B cell (primary cell): ENCODE measurements at regions of chr3 and their contacts with region 1.

Region 1: DNA sequence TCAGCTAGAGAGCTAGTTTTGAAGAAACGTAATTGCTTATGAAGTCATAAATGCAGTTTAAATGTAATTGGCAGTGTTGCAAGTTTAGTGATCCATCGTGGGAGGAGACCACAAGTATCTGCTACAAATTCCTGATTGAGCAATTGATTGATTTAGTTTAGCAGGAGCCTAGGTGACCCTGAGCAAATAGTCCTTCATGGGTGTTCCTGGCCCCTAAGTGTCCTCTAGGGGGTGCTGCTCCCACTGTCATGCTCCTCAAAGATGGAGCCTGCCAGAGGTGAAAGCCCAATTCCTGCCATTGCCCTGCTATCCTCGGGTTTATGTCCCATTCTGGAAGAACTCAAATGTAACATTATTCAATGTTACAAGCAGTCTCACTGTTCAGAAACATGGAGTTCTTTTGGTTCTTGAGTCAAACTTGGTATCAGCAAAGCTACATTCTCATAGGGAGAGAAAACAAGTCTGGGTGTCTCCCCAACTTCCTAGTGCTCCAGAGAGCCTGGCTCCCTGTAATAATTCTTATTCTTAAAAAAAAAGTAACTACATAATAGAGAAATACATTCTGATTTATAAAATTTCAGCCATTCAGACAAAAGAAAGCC is 29.8 kb upstream of the SENP5 start:
- DNase-seq: peak; percentile 81
- ATAC-seq: peak; percentile 90
- H3K4me3 ChIP-seq: no peak overlapping the region
- H3K4me3 Mint-ChIP-seq: no peak overlapping the region
- H3K27ac ChIP-seq: no peak overlapping the region
- H3K27ac Mint-ChIP-seq: no peak overlapping the region
- H3K4me1 ChIP-seq: peaks cover 0 to 2% of the 10 kb centered on the region in 2 donors
- H3K4me1 Mint-ChIP-seq: no peaks in the 10 kb centered on the region
- H3K27me3 ChIP-seq: no peaks in the 10 kb centered on the region
- H3K27me3 Mint-ChIP-seq: no peaks in the 10 kb centered on the region
- CTCF ChIP-seq: peak; percentile 93

Region 2: GRCh38 chr3:196639483-196640296 is 198.2 kb before region 1 on chr3 and contains the start of gene NRROS:
- CTCF ChIA-PET with region 1: no interaction called
- POLR2A ChIA-PET with region 1: no interaction called
- intact Hi-C with region 1: no loop called
- DNase-seq: peak; percentile 91
- ATAC-seq: peak; percentile 48
- H3K4me3 ChIP-seq: peak within 1 kb of the TSS; percentile 80 to 88 (median 83)
- H3K4me3 Mint-ChIP-seq: peak within 1 kb of the TSS; percentile 89
- H3K27ac ChIP-seq: peak within 1 kb of the TSS; percentile 85 to 93
- H3K27ac Mint-ChIP-seq: peak within 1 kb of the TSS; percentile 99
- H3K4me1 ChIP-seq: peaks cover 58 to 71% of the 10 kb centered on the region in 2 donors
- H3K4me1 Mint-ChIP-seq: peaks cover 73% of the 10 kb centered on the region
- H3K27me3 ChIP-seq: no peaks in the 10 kb centered on the region
- H3K27me3 Mint-ChIP-seq: no peaks in the 10 kb centered on the region
- CTCF ChIP-seq: no peak
- total RNA-seq, gene NRROS: 85.9 and 87.9 TPM in 2 replicates

Region 3: GRCh38 chr3:196867507-196868296 is 29.8 kb after region 1 on chr3 and contains the start of gene SENP5:
- CTCF ChIA-PET with region 1: interaction called, 4 read pairs
- POLR2A ChIA-PET with region 1: no interaction called
- intact Hi-C with region 1: loop called (anchors 1 kb)
- DNase-seq: peak; percentile 93
- ATAC-seq: peak; percentile 97
- H3K4me3 ChIP-seq: peak within 1 kb of the TSS; percentile 63 to 89 (median 77)
- H3K4me3 Mint-ChIP-seq: peak within 1 kb of the TSS; percentile 96
- H3K27ac ChIP-seq: peak within 1 kb of the TSS; percentile 77 to 95
- H3K27ac Mint-ChIP-seq: peak within 1 kb of the TSS; percentile 95
- H3K4me1 ChIP-seq: peaks cover 14 to 19% of the 10 kb centered on the region in 2 donors
- H3K4me1 Mint-ChIP-seq: peaks cover 29% of the 10 kb centered on the region
- H3K27me3 ChIP-seq: no peaks in the 10 kb centered on the region
- H3K27me3 Mint-ChIP-seq: no peaks in the 10 kb centered on the region
- CTCF ChIP-seq: no peak
- total RNA-seq, gene SENP5: 51.5 and 58.4 TPM in 2 replicates

Region 4: DNA sequence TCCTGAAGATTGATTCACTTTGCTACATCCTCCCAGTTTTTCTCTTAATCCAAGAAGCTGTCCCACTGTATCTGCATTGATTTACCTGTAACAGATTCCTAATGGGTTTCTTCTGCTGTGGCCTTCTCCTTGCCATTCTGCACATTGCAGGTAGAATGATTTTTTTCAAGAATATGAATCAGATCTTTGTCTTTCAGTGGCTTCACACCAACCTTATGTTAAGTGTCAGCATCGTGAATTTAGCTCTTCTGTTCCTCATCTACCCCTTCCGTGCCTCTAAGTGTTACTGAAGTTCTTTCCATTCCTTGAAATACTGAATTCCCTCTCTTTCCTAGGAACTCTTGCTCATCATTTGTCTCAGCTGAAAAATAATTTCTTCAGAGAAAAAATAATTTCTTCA is 37.3 kb after region 1 on chr3:
- CTCF ChIA-PET with region 1: no interaction called
- POLR2A ChIA-PET with region 1: interaction called, 11 read pairs
- intact Hi-C with region 1: no loop called
- DNase-seq: no peak
- ATAC-seq: no peak
- H3K4me3 ChIP-seq: no peak overlapping the region
- H3K4me3 Mint-ChIP-seq: no peak overlapping the region
- H3K27ac ChIP-seq: no peak overlapping the region
- H3K27ac Mint-ChIP-seq: no peak overlapping the region
- H3K4me1 ChIP-seq: peaks cover 3% of the 10 kb centered on the region in 2 donors
- H3K4me1 Mint-ChIP-seq: peaks cover 36% of the 10 kb centered on the region
- H3K27me3 ChIP-seq: no peaks in the 10 kb centered on the region
- H3K27me3 Mint-ChIP-seq: no peaks in the 10 kb centered on the region
- CTCF ChIP-seq: no peak

Region 5: DNA sequence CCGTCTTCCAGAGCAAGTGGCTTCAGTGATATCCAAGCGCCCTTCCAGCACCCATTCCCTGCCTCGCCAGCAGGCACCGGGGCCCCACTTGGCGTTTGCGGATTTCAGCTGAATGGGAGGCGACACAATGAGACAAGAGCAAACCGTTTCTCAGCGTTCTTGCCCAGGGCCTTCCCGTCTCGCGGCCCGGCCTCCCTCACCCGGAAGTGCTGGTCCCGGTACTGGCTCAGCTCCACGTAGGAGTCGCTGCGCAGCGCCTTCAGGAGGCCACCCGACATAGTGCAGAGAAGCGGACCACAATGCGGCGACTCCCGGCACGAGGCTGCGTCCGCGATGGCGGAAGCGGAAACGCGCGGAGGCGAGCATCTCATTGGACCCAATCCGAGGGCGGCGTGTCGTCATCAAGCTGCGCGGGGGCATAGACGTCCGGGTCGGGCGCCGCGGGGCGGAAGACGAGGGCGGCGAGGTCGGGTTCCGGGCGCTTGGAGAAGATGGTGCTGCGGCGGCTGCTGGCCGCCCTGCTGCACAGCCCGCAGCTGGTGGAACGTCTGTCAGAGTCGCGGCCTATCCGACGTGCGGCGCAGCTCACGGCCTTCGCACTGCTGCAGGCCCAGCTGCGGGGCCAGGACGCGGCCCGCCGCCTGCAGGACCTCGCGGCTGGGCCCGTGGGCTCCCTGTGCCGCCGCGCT is 104.5 kb after region 1 on chr3 and contains the start of gene NCBP2:
- CTCF ChIA-PET with region 1: interaction called, 19 read pairs
- POLR2A ChIA-PET with region 1: interaction called, 7 read pairs
- intact Hi-C with region 1: no loop called
- DNase-seq: peak; percentile 99
- ATAC-seq: peak; percentile 91
- H3K4me3 ChIP-seq: peak within 1 kb of the TSS; percentile 83 to 99 (median 92)
- H3K4me3 Mint-ChIP-seq: peak within 1 kb of the TSS; percentile 98
- H3K27ac ChIP-seq: peak within 1 kb of the TSS; percentile 92 to 97
- H3K27ac Mint-ChIP-seq: peak within 1 kb of the TSS; percentile 99
- H3K4me1 ChIP-seq: peaks cover 29 to 35% of the 10 kb centered on the region in 2 donors
- H3K4me1 Mint-ChIP-seq: peaks cover 50% of the 10 kb centered on the region
- H3K27me3 ChIP-seq: no peaks in the 10 kb centered on the region
- H3K27me3 Mint-ChIP-seq: no peaks in the 10 kb centered on the region
- CTCF ChIP-seq: peak; percentile 77
- total RNA-seq, gene NCBP2: 93.4 and 95.0 TPM in 2 replicates

Region 6: GRCh38 chr3:196969660-196970546 is 132.0 kb after region 1 on chr3:
- CTCF ChIA-PET with region 1: interaction called, 66 read pairs
- POLR2A ChIA-PET with region 1: interaction called, 5 read pairs
- intact Hi-C with region 1: loop called (anchors 1 kb)
- DNase-seq: peak; percentile 83
- ATAC-seq: peak; percentile 76
- H3K4me3 ChIP-seq: peak overlapping the region; percentile 46 to 82 (median 68)
- H3K4me3 Mint-ChIP-seq: peak overlapping the region; percentile 85
- H3K27ac ChIP-seq: no peak overlapping the region
- H3K27ac Mint-ChIP-seq: peak overlapping the region; percentile 81
- H3K4me1 ChIP-seq: peaks cover 5 to 11% of the 10 kb centered on the region in 2 donors
- H3K4me1 Mint-ChIP-seq: peaks cover 19% of the 10 kb centered on the region
- H3K27me3 ChIP-seq: peaks cover 0 to 4% (median 1%) of the 10 kb centered on the region in 4 experiments
- H3K27me3 Mint-ChIP-seq: peaks cover 9% of the 10 kb centered on the region
- CTCF ChIP-seq: peak; percentile 86

Region 7: DNA sequence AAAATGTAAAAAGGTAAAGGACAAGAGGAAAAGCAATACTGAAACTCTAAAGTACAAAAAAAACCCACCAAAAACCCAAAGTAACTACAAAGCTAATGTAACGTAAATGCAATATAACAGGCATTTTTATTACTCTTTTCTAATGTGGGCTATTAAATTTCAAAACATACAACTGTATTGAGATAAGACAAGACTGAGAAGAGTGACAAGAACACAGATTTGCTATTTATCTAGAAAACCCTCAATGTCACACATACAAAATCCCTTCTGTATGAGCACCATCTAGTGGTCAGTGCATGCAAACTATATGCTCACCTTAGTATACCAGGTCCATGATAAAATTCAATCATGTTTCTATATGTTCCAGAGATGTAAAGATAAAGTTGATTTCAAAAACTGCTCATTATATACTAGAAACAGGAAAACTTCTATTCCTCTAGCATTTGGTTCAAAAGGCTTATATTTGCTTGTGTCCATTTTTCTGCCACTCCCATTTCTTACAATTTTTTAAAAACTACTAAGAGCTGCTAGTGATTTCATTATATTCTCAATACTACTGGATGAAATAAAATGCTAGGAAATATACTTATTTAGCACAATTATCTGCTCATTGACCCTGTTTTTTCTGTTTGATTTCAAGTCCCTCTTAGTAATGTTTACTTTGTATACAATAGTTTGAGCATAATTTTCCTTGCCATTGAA is 349.1 kb after region 1 on chr3:
- CTCF ChIA-PET with region 1: interaction called, 15 read pairs
- POLR2A ChIA-PET with region 1: no interaction called
- intact Hi-C with region 1: no loop called
- DNase-seq: peak; percentile 74
- ATAC-seq: peak; percentile 69
- H3K4me3 ChIP-seq: no peak overlapping the region
- H3K4me3 Mint-ChIP-seq: no peak overlapping the region
- H3K27ac ChIP-seq: no peak overlapping the region
- H3K27ac Mint-ChIP-seq: no peak overlapping the region
- H3K4me1 ChIP-seq: no peaks in the 10 kb centered on the region
- H3K4me1 Mint-ChIP-seq: peaks cover 2% of the 10 kb centered on the region
- H3K27me3 ChIP-seq: no peaks in the 10 kb centered on the region
- H3K27me3 Mint-ChIP-seq: no peaks in the 10 kb centered on the region
- CTCF ChIP-seq: peak; percentile 97